ENCODE measurements at regions of chr17 and their contacts with region 1.

Region 1: DNA sequence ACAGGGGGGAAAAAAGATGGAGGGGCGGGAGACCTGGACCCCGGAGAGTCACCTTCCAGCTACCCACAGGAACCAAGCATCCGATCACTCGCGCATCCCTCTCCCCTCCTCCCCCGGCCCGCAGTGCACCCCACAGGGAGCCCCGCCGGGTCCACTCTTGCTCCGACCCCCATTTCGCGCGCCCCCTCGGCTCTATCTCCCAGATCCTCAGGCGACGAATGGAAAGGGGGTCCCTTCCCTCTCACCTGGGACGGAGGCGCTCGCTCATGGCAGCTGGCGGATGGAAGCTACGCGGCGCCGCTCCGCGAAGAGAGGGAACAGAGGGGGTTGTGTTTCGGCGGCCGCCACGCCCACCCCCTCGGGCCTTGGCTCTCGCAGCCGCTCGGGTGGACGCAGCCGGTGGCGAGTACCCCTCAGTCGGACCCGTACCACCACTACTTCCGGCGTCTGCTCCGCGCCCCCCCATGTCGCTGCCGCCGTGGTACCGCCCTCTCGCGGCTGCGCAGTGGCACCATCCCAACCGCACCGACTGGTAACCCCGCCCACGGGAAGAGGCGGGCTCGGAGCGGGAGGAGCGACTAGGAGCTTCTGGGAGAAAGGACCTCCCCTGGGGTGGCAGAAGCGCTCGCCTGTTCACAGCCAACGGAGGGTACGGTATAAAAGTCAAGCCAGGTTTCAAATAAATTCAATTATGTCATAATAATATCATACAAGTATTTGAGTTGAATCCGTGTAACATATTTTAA is 29.7 kb downstream of the CPSF4L start:
- DNase-seq: peak; percentile 93
- H3K4me3 Mint-ChIP-seq: peak overlapping the region; percentile 97
- H3K27ac Mint-ChIP-seq: peak overlapping the region; percentile 90
- H3K4me1 Mint-ChIP-seq: peaks cover 28% of the 10 kb centered on the region
- H3K27me3 Mint-ChIP-seq: no peaks in the 10 kb centered on the region
- CTCF ChIP-seq: no peak

Region 2: GRCh38 chr17:73211745-73212144 is 20.3 kb before region 1 on chr17:
- CTCF ChIA-PET with region 1: interaction called, 3 read pairs
- POLR2A ChIA-PET with region 1: interaction called, 10 read pairs
- intact Hi-C with region 1: no loop called
- DNase-seq: no peak
- H3K4me3 Mint-ChIP-seq: no peak overlapping the region
- H3K27ac Mint-ChIP-seq: no peak overlapping the region
- H3K4me1 Mint-ChIP-seq: peaks cover 13% of the 10 kb centered on the region
- H3K27me3 Mint-ChIP-seq: no peaks in the 10 kb centered on the region
- CTCF ChIP-seq: no peak

Region 3: GRCh38 chr17:73247726-73248125 is 15.7 kb after region 1 on chr17:
- CTCF ChIA-PET with region 1: interaction called, 6 read pairs
- POLR2A ChIA-PET with region 1: interaction called, 18 read pairs
- intact Hi-C with region 1: no loop called
- DNase-seq: no peak
- H3K4me3 Mint-ChIP-seq: no peak overlapping the region
- H3K27ac Mint-ChIP-seq: no peak overlapping the region
- H3K4me1 Mint-ChIP-seq: no peaks in the 10 kb centered on the region
- H3K27me3 Mint-ChIP-seq: no peaks in the 10 kb centered on the region
- CTCF ChIP-seq: no peak

Measured in MCF 10A (cell line).